ENCODE measurements at regions of chr4 and their contacts with region 1.

Region 1: GRCh38 chr4:168109527-168109926 is 17.2 kb downstream of the ANXA10 start:
- DNase-seq: no peak
- ATAC-seq: no peak

Region 2: DNA sequence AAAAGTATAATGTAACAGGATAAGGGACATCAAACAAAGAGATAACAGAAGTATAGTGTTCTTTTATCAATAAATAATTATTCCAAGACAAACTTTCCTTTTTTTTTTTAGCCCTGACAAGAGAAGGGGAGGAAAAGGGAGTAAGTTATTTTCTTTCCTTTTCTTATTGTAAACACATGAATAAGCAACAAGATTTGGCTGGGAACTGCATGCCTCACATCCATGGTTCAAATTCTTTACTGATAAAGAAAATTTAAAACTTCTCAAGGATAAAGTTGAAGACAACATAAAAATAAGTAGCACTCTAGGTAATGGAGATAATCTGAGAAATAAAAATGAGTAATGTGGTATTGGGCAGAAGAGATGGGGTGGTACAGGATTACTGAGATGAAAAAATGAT is 1431.2 kb after region 1 on chr4:
- intact Hi-C with region 1: loop called (anchors 5 kb)
- DNase-seq: no peak
- ATAC-seq: no peak